ENCODE measurements at regions of chr19 and their contacts with region 1.

Region 1: DNA sequence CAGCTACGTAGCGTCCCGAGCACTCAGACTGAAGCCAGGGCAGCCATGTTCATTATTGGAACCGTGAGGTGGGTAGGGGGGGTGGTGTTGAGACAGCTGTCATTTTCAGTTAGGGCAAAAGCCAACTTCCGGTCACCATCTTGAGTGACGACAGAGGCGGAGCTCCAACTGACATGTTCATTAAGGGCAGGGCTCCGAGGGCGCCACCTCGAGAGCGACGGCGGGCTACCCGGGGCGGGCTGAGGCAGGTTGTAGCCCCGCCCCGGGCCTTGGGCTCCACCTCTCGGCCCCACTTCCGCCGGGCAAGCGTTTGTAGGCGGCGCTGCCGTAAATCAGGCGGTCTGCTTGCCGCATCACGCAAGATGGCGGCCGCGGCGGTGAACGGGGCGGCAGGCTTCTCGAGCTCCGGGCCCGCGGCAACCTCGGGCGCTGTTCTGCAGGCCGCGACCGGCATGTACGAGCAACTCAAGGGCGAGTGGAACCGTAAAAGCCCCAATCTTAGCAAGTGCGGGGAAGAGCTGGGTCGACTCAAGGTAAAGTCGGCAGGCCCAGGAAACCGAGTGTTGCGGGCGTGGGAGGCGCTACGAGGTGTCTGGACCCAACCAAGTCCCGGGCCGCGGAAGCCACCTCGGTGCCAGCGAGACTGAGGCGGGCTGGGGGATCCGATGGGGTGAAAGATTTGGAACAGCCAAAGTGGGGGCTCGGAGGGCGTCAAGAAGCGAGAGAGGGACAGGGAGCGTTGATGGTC is at the start of gene PSMD8:
- DNase-seq: peak; percentile 98
- ATAC-seq: peak; percentile 97
- H3K4me3 ChIP-seq: peak within 1 kb of the TSS; percentile 87 to 99 (median 92)
- H3K27ac ChIP-seq: peak within 1 kb of the TSS; percentile 84
- H3K4me1 ChIP-seq: peaks cover 22% of the 10 kb centered on the region
- H3K27me3 ChIP-seq: no peaks in the 10 kb centered on the region; a peak in 1 of 5 replicates
- CTCF ChIP-seq: peak; percentile 65
- EP300 ChIP-seq: no peak
- POLR2A ChIP-seq: peak; percentile 91 to 94
- RAD21 ChIP-seq: no peak; the same call in 1 of the 2 replicates
- total RNA-seq, gene PSMD8: 162 and 182 TPM in 2 replicates

Region 2: GRCh38 chr19:37997911-37998344 is 376.7 kb before region 1 on chr19:
- CTCF ChIA-PET with region 1: no interaction called
- POLR2A ChIA-PET with region 1: no interaction called
- in situ Hi-C with region 1: no loop called
- intact Hi-C with region 1: no loop called
- DNase-seq: no peak
- ATAC-seq: no peak
- H3K4me3 ChIP-seq: no peak overlapping the region
- H3K27ac ChIP-seq: no peak overlapping the region
- H3K4me1 ChIP-seq: peaks cover 9% of the 10 kb centered on the region; the same call in 1 of the 2 replicates
- H3K27me3 ChIP-seq: no peaks in the 10 kb centered on the region
- CTCF ChIP-seq: no peak
- EP300 ChIP-seq: no peak
- POLR2A ChIP-seq: no peak
- RAD21 ChIP-seq: no peak

Region 3: GRCh38 chr19:38294090-38294489 is 80.5 kb before region 1 on chr19:
- CTCF ChIA-PET with region 1: no interaction called
- POLR2A ChIA-PET with region 1: no interaction called
- in situ Hi-C with region 1: no loop called
- intact Hi-C with region 1: no loop called
- DNase-seq: no peak
- ATAC-seq: no peak
- H3K4me3 ChIP-seq: no peak overlapping the region
- H3K27ac ChIP-seq: no peak overlapping the region
- H3K4me1 ChIP-seq: peaks cover 15% of the 10 kb centered on the region
- H3K27me3 ChIP-seq: peaks cover 0 to 38% of the 10 kb centered on the region in 2 experiments; a peak in 4 of 5 replicates
- CTCF ChIP-seq: no peak
- EP300 ChIP-seq: no peak
- POLR2A ChIP-seq: no peak
- RAD21 ChIP-seq: no peak

Region 4: DNA sequence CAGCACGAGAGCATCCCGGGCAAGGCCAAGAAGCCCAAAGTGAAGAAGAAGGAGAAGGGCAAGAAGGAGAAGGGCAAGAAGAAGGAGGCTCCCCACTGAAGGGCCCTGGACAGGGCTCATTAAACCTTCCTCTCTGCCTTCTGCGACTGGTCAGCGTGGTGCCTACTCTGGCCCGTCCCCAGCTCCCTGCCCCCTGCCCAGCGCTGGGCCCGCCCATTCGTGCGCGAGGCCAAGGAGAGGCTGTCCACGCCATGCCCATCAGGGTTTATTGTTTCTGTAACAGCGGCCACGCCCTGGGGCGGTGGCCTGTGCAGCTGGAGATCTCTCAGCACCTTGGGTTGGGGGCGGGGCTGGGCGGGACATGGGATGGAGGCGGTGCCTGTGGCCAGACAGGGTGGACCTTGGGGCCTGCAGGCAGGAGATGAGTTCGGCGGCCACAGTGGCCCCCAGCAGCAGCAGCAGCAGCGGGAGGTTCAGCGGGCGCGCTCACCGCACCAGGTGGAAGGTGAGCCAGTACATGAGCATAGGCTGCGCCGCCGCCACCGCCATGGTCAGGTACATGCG is 69.7 kb before region 1 on chr19:
- CTCF ChIA-PET with region 1: no interaction called
- POLR2A ChIA-PET with region 1: interaction called, 11 read pairs
- in situ Hi-C with region 1: no loop called
- intact Hi-C with region 1: no loop called
- DNase-seq: peak; percentile 76
- ATAC-seq: peak; percentile 64
- H3K4me3 ChIP-seq: peak overlapping the region in 2 of 3 experiments; percentile 26 to 60; a peak in 3 of 6 replicates
- H3K27ac ChIP-seq: peak overlapping the region; percentile 58
- H3K4me1 ChIP-seq: peaks cover 35% of the 10 kb centered on the region
- H3K27me3 ChIP-seq: no peaks in the 10 kb centered on the region
- CTCF ChIP-seq: no peak
- EP300 ChIP-seq: no peak
- POLR2A ChIP-seq: peak in 1 of 2 experiments; percentile 27; a peak in 1 of 4 replicates
- RAD21 ChIP-seq: no peak

Region 5: GRCh38 chr19:38335949-38336637 is 38.5 kb before region 1 on chr19:
- CTCF ChIA-PET with region 1: no interaction called
- POLR2A ChIA-PET with region 1: interaction called, 25 read pairs
- in situ Hi-C with region 1: no loop called
- intact Hi-C with region 1: loop called (anchors 1 kb)
- DNase-seq: peak; percentile 86
- ATAC-seq: peak; percentile 89
- H3K4me3 ChIP-seq: peak overlapping the region; percentile 74 to 85 (median 75)
- H3K27ac ChIP-seq: peak overlapping the region; percentile 42
- H3K4me1 ChIP-seq: peaks cover 10% of the 10 kb centered on the region
- H3K27me3 ChIP-seq: no peaks in the 10 kb centered on the region
- CTCF ChIP-seq: no peak
- EP300 ChIP-seq: no peak
- POLR2A ChIP-seq: no peak
- RAD21 ChIP-seq: no peak

Region 6: GRCh38 chr19:38361633-38362075 is 12.9 kb before region 1 on chr19:
- CTCF ChIA-PET with region 1: no interaction called
- POLR2A ChIA-PET with region 1: interaction called, 24 read pairs
- in situ Hi-C with region 1: no loop called
- intact Hi-C with region 1: loop called (anchors 1 kb)
- DNase-seq: peak; percentile 66
- ATAC-seq: peak; percentile 87
- H3K4me3 ChIP-seq: peak overlapping the region; percentile 57 to 75 (median 62); a peak in 4 of 6 replicates
- H3K27ac ChIP-seq: no peak overlapping the region
- H3K4me1 ChIP-seq: peaks cover 30% of the 10 kb centered on the region
- H3K27me3 ChIP-seq: peaks cover 16 to 49% of the 10 kb centered on the region in 2 experiments; a peak in 4 of 5 replicates
- CTCF ChIP-seq: no peak
- EP300 ChIP-seq: no peak
- POLR2A ChIP-seq: no peak
- RAD21 ChIP-seq: no peak

Region 7: GRCh38 chr19:38387550-38388348 is 13.1 kb after region 1 on chr19 and contains the start of gene GGN:
- CTCF ChIA-PET with region 1: no interaction called
- POLR2A ChIA-PET with region 1: interaction called, 49 read pairs
- in situ Hi-C with region 1: no loop called
- intact Hi-C with region 1: no loop called
- DNase-seq: peak; percentile 49
- ATAC-seq: peak; percentile 63
- H3K4me3 ChIP-seq: peak within 1 kb of the TSS; percentile 46 to 71 (median 63)
- H3K27ac ChIP-seq: no peak within 1 kb of the TSS
- H3K4me1 ChIP-seq: peaks cover 36% of the 10 kb centered on the region
- H3K27me3 ChIP-seq: peaks cover 2 to 20% of the 10 kb centered on the region in 2 experiments; a peak in 3 of 5 replicates
- CTCF ChIP-seq: no peak
- EP300 ChIP-seq: no peak
- POLR2A ChIP-seq: peak in 1 of 2 experiments; percentile 46; a peak in 2 of 4 replicates
- RAD21 ChIP-seq: no peak
- total RNA-seq, gene GGN: not detected in 2 replicates

Region 8: DNA sequence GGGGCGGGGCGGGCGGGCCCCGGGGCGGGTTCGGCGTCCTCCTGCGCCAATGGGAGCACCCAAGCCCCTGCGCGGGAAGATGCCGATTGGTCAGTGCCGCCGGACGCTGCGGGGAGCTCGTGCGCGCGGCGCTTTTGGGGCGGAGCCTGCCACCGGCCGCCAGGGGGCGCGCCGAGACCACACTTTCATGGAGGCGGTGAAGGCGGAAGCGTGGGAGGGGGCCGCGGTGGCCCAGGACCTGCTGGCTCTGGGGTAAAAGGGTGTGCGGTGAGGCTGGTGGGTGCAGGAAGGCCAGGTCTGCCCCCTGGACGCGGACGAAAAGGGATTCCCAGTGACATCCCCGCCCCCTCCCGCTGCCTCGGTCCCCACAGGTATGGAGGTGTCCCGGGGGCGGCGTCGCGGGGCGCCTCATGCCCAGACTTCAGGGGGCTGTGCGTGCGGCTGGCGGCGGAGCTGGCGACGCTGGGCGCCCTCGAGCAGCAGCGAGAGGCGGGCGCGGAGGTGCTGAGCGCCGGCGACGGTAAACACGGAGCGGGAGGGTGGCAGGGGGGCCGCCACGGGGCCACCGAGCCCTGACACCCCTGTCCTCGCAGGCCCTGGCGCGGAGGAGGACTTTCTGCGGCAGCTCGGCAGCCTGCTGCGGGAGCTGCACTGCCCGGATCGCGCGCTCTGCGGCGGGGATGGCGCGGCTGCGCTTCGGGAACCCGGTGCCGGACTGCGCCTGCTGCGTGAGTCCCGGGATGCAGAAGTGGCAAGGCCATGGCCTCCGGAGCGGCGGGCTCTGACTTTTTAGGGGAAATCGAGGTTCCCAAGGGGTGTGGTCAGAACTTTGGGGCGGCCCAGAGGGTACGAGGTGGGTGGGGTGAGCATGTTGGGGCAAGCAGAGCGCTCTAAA is 28.6 kb after region 1 on chr19 and contains the start of gene FAM98C:
- CTCF ChIA-PET with region 1: no interaction called
- POLR2A ChIA-PET with region 1: interaction called, 30 read pairs
- in situ Hi-C with region 1: no loop called
- intact Hi-C with region 1: no loop called
- DNase-seq: peak; percentile 93
- ATAC-seq: peak; percentile 96
- H3K4me3 ChIP-seq: peak within 1 kb of the TSS; percentile 57 to 86 (median 80); a peak in 5 of 6 replicates
- H3K27ac ChIP-seq: peak within 1 kb of the TSS; percentile 55
- H3K4me1 ChIP-seq: no peaks in the 10 kb centered on the region
- H3K27me3 ChIP-seq: peaks cover 5 to 17% of the 10 kb centered on the region in 2 experiments; a peak in 3 of 5 replicates
- CTCF ChIP-seq: peak; percentile 97
- EP300 ChIP-seq: no peak
- POLR2A ChIP-seq: peak; percentile 58 to 62; a peak in 3 of 4 replicates
- RAD21 ChIP-seq: peak; percentile 94
- total RNA-seq, gene FAM98C: 7.4 and 10.0 TPM in 2 replicates

Region 9: DNA sequence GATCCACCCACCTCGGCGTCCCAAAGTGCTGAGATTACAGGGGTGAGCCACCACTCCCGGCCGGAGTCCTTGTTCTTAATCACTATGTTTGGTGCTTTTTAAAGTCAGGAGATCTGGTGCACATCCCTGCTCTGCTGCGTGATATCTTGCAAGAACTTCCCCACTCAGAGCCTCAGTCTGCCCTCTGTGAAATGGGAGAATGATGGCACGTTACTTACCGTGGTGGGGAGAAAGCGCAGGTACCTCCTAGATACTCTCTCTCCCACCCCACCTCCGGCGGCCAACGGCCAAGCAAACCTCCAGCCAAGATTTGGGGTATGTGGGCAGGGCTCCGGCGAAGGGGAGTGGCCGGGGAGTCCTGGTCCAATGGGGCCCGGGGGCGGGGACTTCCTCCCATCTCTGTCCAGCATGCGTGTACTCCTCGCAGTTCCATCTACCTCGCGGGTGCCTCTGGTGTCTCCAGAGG is 58.7 kb after region 1 on chr19 and contains the start of gene RYR1:
- CTCF ChIA-PET with region 1: no interaction called
- POLR2A ChIA-PET with region 1: no interaction called
- in situ Hi-C with region 1: no loop called
- intact Hi-C with region 1: no loop called
- DNase-seq: no peak
- ATAC-seq: peak; percentile 51; the same call in 2 of the 3 replicates
- H3K4me3 ChIP-seq: no peak within 1 kb of the TSS
- H3K27ac ChIP-seq: no peak within 1 kb of the TSS
- H3K4me1 ChIP-seq: no peaks in the 10 kb centered on the region
- H3K27me3 ChIP-seq: peaks cover 0 to 6% of the 10 kb centered on the region in 2 experiments; a peak in 2 of 5 replicates
- CTCF ChIP-seq: no peak
- EP300 ChIP-seq: no peak
- POLR2A ChIP-seq: no peak
- RAD21 ChIP-seq: no peak
- total RNA-seq, gene RYR1: not detected in 2 replicates

Region 10: DNA sequence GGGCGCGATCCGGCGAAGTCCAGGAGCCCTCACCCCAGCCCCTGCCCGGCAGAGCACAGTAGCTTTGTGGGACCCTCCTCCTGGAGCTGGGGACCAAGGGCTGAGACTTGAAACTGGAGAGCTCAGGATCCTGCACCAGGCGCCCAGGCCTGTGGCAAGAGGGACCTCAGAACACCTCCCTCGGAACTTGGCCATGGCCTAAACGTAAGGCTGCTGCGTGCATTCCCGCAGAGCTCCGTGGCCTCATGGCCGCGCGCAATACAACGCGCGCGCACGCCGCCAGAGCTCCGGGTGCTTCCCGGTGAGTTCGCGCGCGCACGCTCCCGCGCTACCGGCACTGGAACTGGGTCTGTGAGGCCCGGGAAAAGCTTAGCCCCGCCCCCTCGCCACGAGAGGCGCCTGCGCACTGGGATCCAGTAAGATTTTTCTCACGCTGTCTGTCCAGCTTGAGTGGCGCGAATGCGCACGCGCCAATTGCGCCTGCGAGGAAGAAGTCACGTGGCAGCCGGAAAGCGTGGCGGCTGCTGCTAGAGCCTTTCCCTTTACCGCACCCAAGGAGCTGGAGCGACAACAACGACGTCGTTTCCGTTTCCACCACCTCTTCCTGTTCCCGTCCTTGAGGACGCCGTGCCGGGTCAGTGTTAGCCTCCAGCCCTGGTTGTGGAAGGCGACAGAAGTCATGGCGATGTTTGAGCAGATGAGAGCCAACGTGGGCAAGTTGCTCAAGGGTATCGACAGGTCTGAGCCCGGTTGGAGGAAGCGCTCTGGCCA is 244.2 kb after region 1 on chr19 and contains the start of gene EIF3K:
- CTCF ChIA-PET with region 1: no interaction called
- POLR2A ChIA-PET with region 1: interaction called, 11 read pairs
- in situ Hi-C with region 1: no loop called
- intact Hi-C with region 1: no loop called
- DNase-seq: peak; percentile 97
- ATAC-seq: peak; percentile 91
- H3K4me3 ChIP-seq: peak within 1 kb of the TSS; percentile 92 to 95 (median 94)
- H3K27ac ChIP-seq: peak within 1 kb of the TSS; percentile 66
- H3K4me1 ChIP-seq: peaks cover 36% of the 10 kb centered on the region
- H3K27me3 ChIP-seq: no peaks in the 10 kb centered on the region; a peak in 2 of 5 replicates
- CTCF ChIP-seq: no peak
- EP300 ChIP-seq: no peak
- POLR2A ChIP-seq: peak; percentile 76 to 88
- RAD21 ChIP-seq: no peak
- total RNA-seq, gene EIF3K: 258 and 351 TPM in 2 replicates

Measured in HepG2 (cell line).